HepG2 (cell line): ENCODE measurements at regions of chr4 and their contacts with region 1.

Region 1: DNA sequence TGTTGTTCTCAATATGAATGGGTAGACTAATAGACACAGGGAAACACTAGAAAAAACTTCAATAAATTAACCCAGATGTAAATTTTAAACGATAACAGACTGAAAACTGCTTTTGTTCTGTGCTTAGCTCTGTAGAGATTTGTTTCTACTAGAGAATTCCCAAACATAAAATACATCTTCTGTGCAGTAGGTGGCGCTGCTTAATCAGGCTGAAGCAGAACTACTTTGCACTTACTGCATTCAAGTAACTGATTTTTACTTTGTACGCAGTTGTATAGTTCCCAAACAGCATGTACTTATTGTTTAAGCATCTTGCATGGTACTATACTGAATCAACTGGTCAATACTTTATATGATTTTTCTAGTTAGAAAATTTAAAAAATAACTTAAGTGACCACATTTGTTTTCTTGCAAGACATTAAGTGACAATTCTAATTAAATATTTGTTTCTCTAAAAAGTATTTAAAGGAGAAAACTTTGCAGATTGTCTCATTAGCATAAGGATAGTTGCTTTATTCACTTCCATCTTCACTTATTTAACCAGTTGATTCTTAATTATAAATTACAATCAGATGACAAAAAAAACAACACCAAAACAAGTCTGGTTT is 490.6 kb downstream of the IL15 start:
- DNase-seq: peak; percentile 31
- ATAC-seq: peak; percentile 62
- H3K4me3 ChIP-seq: no peak overlapping the region
- H3K27ac ChIP-seq: no peak overlapping the region
- H3K4me1 ChIP-seq: no peaks in the 10 kb centered on the region
- H3K27me3 ChIP-seq: no peaks in the 10 kb centered on the region
- CTCF ChIP-seq: peak; percentile 74
- EP300 ChIP-seq: no peak
- POLR2A ChIP-seq: no peak
- RAD21 ChIP-seq: peak; percentile 33; the same call in 1 of the 2 replicates

Region 2: GRCh38 chr4:142840516-142841123 is 713.6 kb after region 1 on chr4:
- CTCF ChIA-PET with region 1: interaction called, 4 read pairs
- POLR2A ChIA-PET with region 1: no interaction called
- in situ Hi-C with region 1: loop called (anchors 10 kb)
- intact Hi-C with region 1: loop called (anchors 1 kb)
- DNase-seq: peak; percentile 3
- ATAC-seq: no peak
- H3K4me3 ChIP-seq: no peak overlapping the region
- H3K27ac ChIP-seq: no peak overlapping the region
- H3K4me1 ChIP-seq: no peaks in the 10 kb centered on the region
- H3K27me3 ChIP-seq: peaks cover 0 to 8% of the 10 kb centered on the region in 2 experiments; a peak in 2 of 5 replicates
- CTCF ChIP-seq: peak; percentile 46
- EP300 ChIP-seq: no peak
- POLR2A ChIP-seq: no peak
- RAD21 ChIP-seq: no peak

Region 3: GRCh38 chr4:142846729-142847596 is 720.0 kb after region 1 on chr4:
- CTCF ChIA-PET with region 1: interaction called, 5 read pairs
- POLR2A ChIA-PET with region 1: no interaction called
- in situ Hi-C with region 1: loop called (anchors 10 kb)
- intact Hi-C with region 1: no loop called
- DNase-seq: peak; percentile 10
- ATAC-seq: peak; percentile 95
- H3K4me3 ChIP-seq: no peak overlapping the region
- H3K27ac ChIP-seq: no peak overlapping the region
- H3K4me1 ChIP-seq: no peaks in the 10 kb centered on the region
- H3K27me3 ChIP-seq: peaks cover 2 to 21% of the 10 kb centered on the region in 2 experiments; a peak in 4 of 5 replicates
- CTCF ChIP-seq: peak; percentile 55
- EP300 ChIP-seq: no peak
- POLR2A ChIP-seq: no peak
- RAD21 ChIP-seq: no peak